ENCODE measurements at regions of chr14 and their contacts with region 1.

Region 1: GRCh38 chr14:73741386-73741875 is 27.2 kb upstream of the PNMA1 start:
- DNase-seq: peak; percentile 90 to 93 (median 92)
- ATAC-seq: peak; percentile 82
- H3K4me3 ChIP-seq: peak overlapping the region; percentile 17; the same call in 1 of the 2 replicates
- H3K27ac ChIP-seq: peak overlapping the region; percentile 86
- H3K4me1 ChIP-seq: peaks cover 56 to 78% of the 10 kb centered on the region in 2 experiments
- H3K27me3 ChIP-seq: no peaks in the 10 kb centered on the region
- CTCF ChIP-seq: peak; percentile 13 to 15 (median 15); a peak in 2 of 6 replicates
- EP300 ChIP-seq: peak; percentile 85
- POLR2A ChIP-seq: no peak
- RAD21 ChIP-seq: no peak

Region 2: GRCh38 chr14:73728717-73729330 is 12.6 kb before region 1 on chr14:
- CTCF ChIA-PET with region 1: no interaction called
- POLR2A ChIA-PET with region 1: interaction called, 13 read pairs
- in situ Hi-C with region 1: no loop called
- intact Hi-C with region 1: no loop called
- DNase-seq: peak; percentile 75 to 89 (median 78)
- ATAC-seq: peak; percentile 79
- H3K4me3 ChIP-seq: no peak overlapping the region
- H3K27ac ChIP-seq: peak overlapping the region; percentile 67
- H3K4me1 ChIP-seq: peaks cover 41% of the 10 kb centered on the region in 2 experiments
- H3K27me3 ChIP-seq: no peaks in the 10 kb centered on the region
- CTCF ChIP-seq: peak; percentile 83 to 89 (median 85)
- EP300 ChIP-seq: no peak
- POLR2A ChIP-seq: no peak
- RAD21 ChIP-seq: peak; percentile 86 to 92

Region 3: GRCh38 chr14:73753959-73754882 is 12.8 kb after region 1 on chr14:
- CTCF ChIA-PET with region 1: no interaction called
- POLR2A ChIA-PET with region 1: interaction called, 80 read pairs
- in situ Hi-C with region 1: no loop called
- intact Hi-C with region 1: loop called (anchors 2 kb)
- DNase-seq: no peak
- ATAC-seq: peak; percentile 2
- H3K4me3 ChIP-seq: peak overlapping the region; percentile 33
- H3K27ac ChIP-seq: peak overlapping the region; percentile 84
- H3K4me1 ChIP-seq: peaks cover 74 to 76% of the 10 kb centered on the region in 2 experiments
- H3K27me3 ChIP-seq: no peaks in the 10 kb centered on the region
- CTCF ChIP-seq: no peak
- EP300 ChIP-seq: no peak
- POLR2A ChIP-seq: no peak
- RAD21 ChIP-seq: peak in 1 of 2 experiments; percentile 2; a peak in 1 of 4 replicates

Region 4: DNA sequence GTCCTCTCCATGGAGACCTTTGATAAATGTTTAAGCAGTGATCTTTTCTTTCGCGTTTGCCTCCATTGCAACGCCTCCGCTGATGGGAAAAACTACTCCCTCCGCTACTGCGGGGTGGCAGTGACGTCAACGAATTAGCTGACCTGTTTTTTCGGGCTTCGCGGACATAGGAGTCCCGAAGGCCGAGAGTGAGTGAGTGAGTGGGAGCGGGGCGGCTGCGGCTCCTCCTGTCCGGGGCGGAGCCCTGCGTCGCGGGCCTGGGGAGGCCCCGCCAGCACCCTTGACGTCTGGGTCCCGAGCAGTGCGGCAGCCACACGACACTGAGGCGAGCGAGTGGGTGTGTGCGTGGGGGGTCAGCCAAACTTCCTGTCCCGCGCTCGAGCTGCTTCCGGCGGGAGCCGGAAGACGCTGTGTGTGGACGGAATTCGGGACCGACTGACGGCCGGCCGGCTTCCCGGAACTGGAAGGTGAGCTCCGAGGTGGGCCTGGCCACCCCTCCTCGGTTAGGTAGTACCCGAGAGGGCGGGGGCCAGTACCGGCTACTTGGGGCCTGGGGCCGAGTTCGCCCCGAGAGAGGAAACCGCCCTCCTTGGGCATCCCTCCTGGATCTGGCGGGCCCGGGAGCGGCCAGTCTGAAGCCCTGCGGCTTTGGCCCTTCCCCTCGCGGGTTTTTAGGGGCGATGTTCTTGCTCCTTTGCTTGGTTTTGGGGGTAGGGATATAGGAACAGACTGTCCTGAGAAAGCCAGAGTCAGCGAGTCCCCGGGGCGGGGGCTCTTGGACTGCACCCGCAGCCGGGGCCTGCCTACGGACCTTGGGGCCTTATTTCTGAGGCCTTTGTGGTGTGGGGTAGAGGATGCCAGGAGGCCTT is 145.3 kb after region 1 on chr14 and contains the start of gene ZNF410:
- CTCF ChIA-PET with region 1: no interaction called
- POLR2A ChIA-PET with region 1: no interaction called
- in situ Hi-C with region 1: no loop called
- intact Hi-C with region 1: loop called (anchors 5 kb)
- DNase-seq: peak; percentile 87 to 96 (median 90)
- ATAC-seq: peak; percentile 98
- H3K4me3 ChIP-seq: peak within 1 kb of the TSS; percentile 86
- H3K27ac ChIP-seq: peak within 1 kb of the TSS; percentile 96
- H3K4me1 ChIP-seq: peaks cover 4 to 6% of the 10 kb centered on the region in 2 experiments; a peak in 4 of 5 replicates
- H3K27me3 ChIP-seq: no peaks in the 10 kb centered on the region
- CTCF ChIP-seq: no peak
- EP300 ChIP-seq: peak; percentile 54; the same call in 1 of the 2 replicates
- POLR2A ChIP-seq: peak; percentile 71
- RAD21 ChIP-seq: no peak
- polyA plus RNA-seq, gene ZNF410: 48.6 to 64.8 TPM